ENCODE measurements at regions of chr3 and their contacts with region 1.

Region 1: GRCh38 chr3:37736624-37737023 is 125.1 kb upstream of the CTDSPL start:
- DNase-seq: no peak

Region 2: GRCh38 chr3:37537914-37538691 is 198.5 kb before region 1 on chr3:
- intact Hi-C with region 1: loop called (anchors 5 kb)
- DNase-seq: no peak

Region 3: DNA sequence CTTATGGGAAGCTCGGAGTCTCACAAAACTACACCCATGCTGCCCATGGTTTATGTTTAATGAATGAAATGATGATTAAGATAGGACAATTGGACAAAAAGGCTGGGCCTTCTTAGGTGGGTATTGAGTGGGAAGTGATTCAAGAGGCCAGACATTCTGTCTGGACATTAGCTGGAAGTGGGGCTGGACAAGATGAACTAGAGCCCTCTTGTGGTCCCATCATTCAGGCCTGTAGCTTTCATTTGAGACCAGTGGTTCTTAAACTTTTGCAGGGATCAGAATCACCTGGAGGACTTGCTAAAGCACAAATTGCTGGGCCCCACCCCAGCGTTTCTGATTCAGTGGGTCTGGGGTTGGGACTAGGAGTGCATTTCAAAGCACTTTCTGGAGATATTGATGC is 165.4 kb before region 1 on chr3:
- intact Hi-C with region 1: loop called (anchors 10 kb)
- DNase-seq: no peak

Region 4: GRCh38 chr3:37590328-37591079 is 146.1 kb before region 1 on chr3:
- intact Hi-C with region 1: loop called (anchors 5 kb)
- DNase-seq: no peak

Region 5: GRCh38 chr3:37668431-37668817 is 68.2 kb before region 1 on chr3:
- intact Hi-C with region 1: loop called (anchors 5 kb)
- DNase-seq: no peak

Region 6: GRCh38 chr3:37770938-37771918 is 34.6 kb after region 1 on chr3:
- intact Hi-C with region 1: loop called (anchors 2 kb)
- DNase-seq: peak; percentile 82

Region 7: GRCh38 chr3:37872413-37873160 is 136.0 kb after region 1 on chr3:
- intact Hi-C with region 1: no loop called
- DNase-seq: no peak